Posterior vena cava (tissue), 2 donors: ENCODE measurements at regions of chr2 and their contacts with region 1.

Region 1: GRCh38 chr2:38274286-38275276 is 102.5 kb downstream of the ATL2 start:
- DNase-seq: no peak

Region 2: DNA sequence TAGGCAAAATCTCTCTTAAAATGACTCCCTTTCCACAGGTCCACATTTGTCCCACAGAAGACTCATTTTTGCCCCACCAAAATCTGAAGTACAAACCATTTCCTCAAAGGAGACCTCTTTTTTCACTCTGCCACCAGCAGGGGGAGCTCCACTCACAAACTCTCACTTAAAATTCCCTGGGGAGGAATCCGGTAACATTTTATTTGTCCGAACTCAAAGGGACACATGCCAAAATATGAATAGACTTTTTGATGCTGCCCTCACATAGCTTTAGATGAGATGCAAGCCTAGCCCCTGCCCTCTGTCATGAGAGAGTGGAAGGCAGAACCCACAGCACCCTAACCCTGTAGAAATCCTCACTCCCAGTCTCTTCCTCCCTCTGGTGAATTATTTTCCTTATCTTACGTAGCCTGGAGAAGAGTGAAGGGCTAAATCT is 292.4 kb before region 1 on chr2:
- intact Hi-C with region 1: loop called (anchors 5 kb)
- DNase-seq: peak; percentile 87

Region 3: GRCh38 chr2:38076606-38077430 is 197.8 kb before region 1 on chr2:
- intact Hi-C with region 1: loop called in 1 of 2 experiments (anchors 5 kb)
- DNase-seq: peak; percentile 94

Region 4: DNA sequence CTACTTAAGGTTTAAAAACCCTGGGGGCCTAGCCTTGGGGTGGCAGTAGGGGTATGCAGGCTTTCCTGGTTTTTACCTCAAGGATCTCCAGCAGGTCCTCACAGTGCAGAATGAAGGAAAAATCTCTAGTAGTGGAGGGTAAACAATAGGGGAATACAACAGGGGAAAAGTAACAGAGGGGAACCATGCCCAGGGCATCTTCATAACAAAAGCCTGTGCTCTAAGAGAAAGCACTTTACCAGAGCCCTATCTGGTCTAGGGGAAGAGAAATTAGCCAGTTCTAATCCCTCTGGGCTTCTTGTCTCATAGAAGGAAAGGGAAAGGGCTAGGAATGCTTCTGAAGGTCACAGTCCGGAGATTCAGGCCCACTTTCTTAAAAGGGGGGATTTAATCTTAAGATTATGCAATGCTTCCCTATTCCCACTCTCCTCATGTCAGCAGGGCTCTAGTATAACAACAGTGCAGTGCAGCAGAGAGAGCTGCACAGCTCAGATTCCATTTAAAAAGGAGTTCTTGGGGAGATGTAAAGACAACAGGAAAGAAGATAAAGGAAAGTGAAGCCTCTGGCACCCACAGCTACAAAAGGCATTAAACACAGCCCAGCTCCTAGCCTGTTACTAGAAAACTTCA is 49.6 kb before region 1 on chr2:
- intact Hi-C with region 1: no loop called
- DNase-seq: no peak